PC-3 (cell line): ENCODE measurements at regions of chr2 and their contacts with region 1.

Region 1: GRCh38 chr2:200405599-200406298 is 99.3 kb downstream of the SPATS2L start:
- DNase-seq: peak; percentile 96
- ATAC-seq: peak; percentile 85
- H3K4me3 ChIP-seq: peak overlapping the region; percentile 51
- H3K27ac ChIP-seq: peak overlapping the region; percentile 99
- H3K4me1 ChIP-seq: peaks cover 70% of the 10 kb centered on the region
- H3K27me3 ChIP-seq: no peaks in the 10 kb centered on the region
- CTCF ChIP-seq: no peak

Region 2: GRCh38 chr2:199979832-199980628 is 425.7 kb before region 1 on chr2:
- CTCF ChIA-PET with region 1: no interaction called
- POLR2A ChIA-PET with region 1: interaction called, 3 read pairs
- intact Hi-C with region 1: loop called (anchors 5 kb)
- DNase-seq: peak; percentile 89
- ATAC-seq: peak; percentile 52
- H3K4me3 ChIP-seq: no peak overlapping the region
- H3K27ac ChIP-seq: no peak overlapping the region
- H3K4me1 ChIP-seq: peaks cover 26% of the 10 kb centered on the region
- H3K27me3 ChIP-seq: no peaks in the 10 kb centered on the region
- CTCF ChIP-seq: peak; percentile 96

Region 3: DNA sequence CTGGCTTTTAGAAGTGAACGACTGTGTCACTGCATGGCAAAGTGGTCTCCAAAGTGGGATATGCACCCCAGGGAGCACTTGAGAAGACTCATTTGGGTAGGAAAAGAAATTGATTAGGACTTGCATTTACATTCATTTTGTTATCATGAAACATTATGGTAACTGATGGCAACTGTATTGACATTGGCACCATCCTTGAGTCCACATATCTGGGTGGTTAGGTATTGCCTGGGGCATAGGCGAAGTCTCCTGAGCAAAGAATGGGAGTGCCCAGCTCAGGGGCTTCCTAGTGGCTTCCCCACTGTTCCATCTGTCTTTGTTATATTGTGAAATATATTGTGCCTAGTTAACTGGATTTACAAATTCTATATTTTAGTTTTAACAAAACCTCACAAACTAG is 70.1 kb before region 1 on chr2:
- CTCF ChIA-PET with region 1: no interaction called
- POLR2A ChIA-PET with region 1: no interaction called
- intact Hi-C with region 1: loop called (anchors 2 kb)
- DNase-seq: peak; percentile 90
- ATAC-seq: peak; percentile 89
- H3K4me3 ChIP-seq: no peak overlapping the region
- H3K27ac ChIP-seq: peak overlapping the region; percentile 83
- H3K4me1 ChIP-seq: peaks cover 30% of the 10 kb centered on the region
- H3K27me3 ChIP-seq: no peaks in the 10 kb centered on the region
- CTCF ChIP-seq: no peak

Region 4: GRCh38 chr2:200373973-200374416 is 31.8 kb before region 1 on chr2:
- CTCF ChIA-PET with region 1: no interaction called
- POLR2A ChIA-PET with region 1: interaction called, 3 read pairs
- intact Hi-C with region 1: loop called (anchors 2 kb)
- DNase-seq: peak; percentile 66
- ATAC-seq: peak; percentile 51
- H3K4me3 ChIP-seq: peak overlapping the region; percentile 36
- H3K27ac ChIP-seq: peak overlapping the region; percentile 40
- H3K4me1 ChIP-seq: peaks cover 54% of the 10 kb centered on the region
- H3K27me3 ChIP-seq: no peaks in the 10 kb centered on the region
- CTCF ChIP-seq: no peak

Region 5: DNA sequence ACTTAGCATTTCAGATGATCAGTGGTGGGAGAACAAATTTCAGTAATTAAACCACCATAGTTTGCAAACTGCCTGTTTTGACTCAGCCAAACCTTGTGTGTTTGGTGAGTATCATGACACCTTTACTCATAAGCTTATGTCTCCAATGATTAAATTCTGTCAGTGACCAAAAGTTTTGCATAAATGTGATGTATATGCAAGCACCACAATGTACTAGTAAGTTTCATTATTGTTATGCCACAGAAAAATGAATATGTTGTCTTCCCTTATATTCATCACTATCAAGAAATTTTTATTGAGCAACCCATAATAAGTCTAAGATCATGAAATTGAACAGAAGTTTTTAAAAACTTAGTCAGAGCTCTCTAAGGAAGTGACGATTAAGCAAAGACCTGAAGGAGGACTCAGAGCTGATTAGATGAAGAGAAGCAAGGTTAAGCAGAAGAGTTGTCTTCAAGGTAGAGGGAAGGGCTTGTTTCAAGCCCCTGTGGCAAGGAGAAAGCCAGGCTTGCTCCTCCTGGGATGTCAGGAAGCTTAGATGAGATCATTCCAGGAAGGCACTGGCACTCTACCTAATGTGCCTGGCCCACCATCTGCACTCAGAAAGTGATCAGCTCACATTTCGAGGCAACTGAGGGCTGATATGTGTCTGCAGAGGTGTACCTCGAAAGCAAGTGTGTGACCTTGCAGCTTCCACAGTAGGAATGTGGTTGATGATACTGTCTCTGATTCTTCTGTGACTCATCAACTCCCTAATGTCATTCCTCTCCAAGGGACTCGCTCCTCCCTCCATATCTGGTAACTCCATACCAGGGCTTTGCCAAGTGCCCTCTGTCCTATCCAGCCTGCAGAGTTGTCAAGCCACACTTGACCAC is 49.4 kb after region 1 on chr2:
- CTCF ChIA-PET with region 1: no interaction called
- POLR2A ChIA-PET with region 1: no interaction called
- intact Hi-C with region 1: no loop called
- DNase-seq: peak; percentile 86
- ATAC-seq: peak; percentile 91
- H3K4me3 ChIP-seq: no peak overlapping the region
- H3K27ac ChIP-seq: peak overlapping the region; percentile 67
- H3K4me1 ChIP-seq: peaks cover 27% of the 10 kb centered on the region
- H3K27me3 ChIP-seq: no peaks in the 10 kb centered on the region
- CTCF ChIP-seq: no peak